Ascending aorta (tissue), 2 donors: ENCODE measurements at regions of chr12 and their contacts with region 1.

Region 1: DNA sequence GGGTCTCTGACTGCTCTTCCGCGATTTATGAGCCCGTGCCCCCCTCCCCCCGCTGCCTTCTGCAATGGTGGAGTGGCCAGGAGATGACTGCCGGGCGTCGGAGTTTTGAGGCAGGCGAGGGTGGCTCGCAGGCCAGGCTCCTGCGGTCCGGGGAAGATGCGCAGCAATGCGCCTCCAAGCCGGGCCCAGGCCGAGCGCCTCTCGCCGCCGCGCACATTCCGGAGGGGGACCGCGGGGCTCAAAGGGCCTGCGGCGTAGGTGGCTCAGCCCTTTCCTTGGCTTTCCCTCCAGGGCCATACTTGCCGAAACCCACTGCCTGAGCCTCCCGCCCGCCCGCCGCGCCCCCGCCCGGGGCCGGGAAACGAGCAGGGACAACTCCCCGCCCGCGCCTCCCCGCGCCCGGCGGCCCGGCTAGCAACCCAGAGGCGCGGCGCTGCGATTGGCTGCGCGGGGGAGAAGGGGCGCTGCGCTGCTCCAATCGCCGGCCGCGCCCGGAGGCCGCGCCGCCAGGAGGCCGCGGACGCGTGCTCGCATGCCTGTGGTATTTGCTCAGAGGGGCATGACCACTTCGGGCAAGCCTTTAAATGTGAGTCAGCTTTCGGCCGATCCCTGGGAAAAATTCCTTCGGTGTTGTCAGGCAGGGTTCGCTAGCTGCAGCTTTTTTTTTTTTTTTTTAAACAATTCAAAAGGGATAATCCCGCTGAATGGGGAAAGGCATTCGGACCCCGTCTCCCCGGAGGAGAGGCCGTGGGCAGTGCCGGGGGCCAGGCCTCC is 157.9 kb upstream of the PARP11 start:
- DNase-seq: peak; percentile 81 to 97
- H3K4me3 ChIP-seq: peak overlapping the region; percentile 51 to 77
- H3K27ac ChIP-seq: peak overlapping the region; percentile 87 to 90
- H3K4me1 ChIP-seq: peaks cover 5 to 6% of the 10 kb centered on the region in 2 donors
- H3K27me3 ChIP-seq: no peaks in the 10 kb centered on the region
- CTCF ChIP-seq: peak in 1 of 3 experiments; percentile 6

Region 2: DNA sequence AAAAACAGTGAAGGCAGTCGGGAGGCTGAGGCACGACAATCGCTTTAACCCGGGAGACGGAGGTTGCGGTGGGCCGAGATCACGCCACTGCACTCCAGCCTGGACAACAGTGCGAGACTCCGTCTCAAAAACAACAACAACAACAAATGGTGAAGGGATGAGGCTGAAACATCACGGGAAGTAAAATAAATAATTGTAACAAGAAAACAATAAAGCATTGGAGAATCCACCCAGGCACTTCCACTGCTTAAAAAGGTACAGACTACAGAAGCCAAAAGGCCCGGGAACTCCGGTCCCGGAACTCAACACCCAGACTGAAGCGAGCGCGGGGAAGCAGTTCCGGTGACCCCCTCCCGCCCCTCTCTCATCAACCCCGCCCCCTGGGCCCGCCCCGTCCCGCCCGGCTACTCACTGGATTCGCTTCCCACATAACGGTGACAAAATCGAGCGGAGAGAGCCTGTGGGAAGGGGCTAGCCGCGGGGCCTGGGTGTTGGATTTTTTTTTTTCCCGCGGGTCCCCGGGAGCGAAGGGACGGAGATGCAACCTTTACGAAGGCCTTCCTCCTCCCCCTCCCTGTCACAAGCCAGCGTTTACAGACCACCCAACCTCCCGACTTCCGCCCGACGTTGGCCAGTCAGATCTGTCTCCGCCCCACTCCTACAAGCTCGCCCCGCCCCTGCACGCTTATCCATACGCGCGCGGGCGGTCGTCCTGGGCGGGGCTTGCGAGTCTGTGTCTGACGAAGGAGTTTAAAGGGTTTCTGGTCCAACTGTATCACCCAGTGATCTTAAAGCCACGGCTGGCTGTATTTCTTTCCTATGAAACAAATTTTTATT is 158.1 kb before region 1 on chr12 and contains the start of gene PARP11:
- intact Hi-C with region 1: loop called (anchors 1 kb)
- DNase-seq: peak; percentile 93 to 99
- H3K4me3 ChIP-seq: peak within 1 kb of the TSS; percentile 49 to 80
- H3K27ac ChIP-seq: peak within 1 kb of the TSS; percentile 93 to 94
- H3K4me1 ChIP-seq: peaks cover 4 to 13% of the 10 kb centered on the region in 2 donors
- H3K27me3 ChIP-seq: no peaks in the 10 kb centered on the region
- CTCF ChIP-seq: no peak
- total RNA-seq, gene PARP11: 4.2 TPM

Region 3: DNA sequence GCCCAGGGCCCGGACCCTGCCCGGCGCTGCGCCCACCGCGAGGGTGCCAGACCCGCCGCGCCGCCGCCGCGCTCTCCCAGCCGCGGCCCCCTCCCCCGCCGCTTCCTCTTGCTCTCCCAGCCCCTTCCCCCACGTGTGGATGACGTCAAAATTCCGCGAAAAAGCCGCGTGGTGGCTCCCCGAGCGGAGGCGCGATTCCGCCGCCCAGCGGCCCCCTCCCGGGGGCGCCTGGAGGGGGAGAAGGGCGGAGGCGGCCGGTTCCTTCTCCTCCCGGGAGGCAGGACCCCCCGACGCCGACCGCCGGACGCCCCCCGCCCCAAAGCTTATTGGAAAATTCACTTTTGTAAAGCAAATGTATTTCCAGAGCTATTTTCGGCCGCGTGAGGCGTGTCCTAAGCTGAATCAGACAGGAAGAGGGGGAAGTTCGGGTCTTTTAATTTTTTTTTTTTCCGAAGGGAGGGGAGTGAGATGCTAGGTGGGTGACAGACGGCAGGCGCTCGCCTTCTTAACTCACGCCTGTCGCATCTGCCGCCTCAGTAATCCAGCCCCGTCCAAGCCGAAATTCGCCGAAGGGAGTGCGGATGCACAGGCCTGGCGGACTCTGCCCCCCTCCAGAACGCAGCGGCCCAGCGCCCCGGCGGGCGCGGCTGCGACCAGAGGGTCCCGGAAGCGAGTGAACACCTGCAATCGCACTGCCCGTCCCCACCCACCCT is 238.3 kb after region 1 on chr12:
- intact Hi-C with region 1: loop called (anchors 1 kb)
- DNase-seq: peak in 1 of 2 donors; percentile 92
- H3K4me3 ChIP-seq: peak overlapping the region; percentile 78 to 87
- H3K27ac ChIP-seq: peak overlapping the region; percentile 83 to 89
- H3K4me1 ChIP-seq: peaks cover 6 to 26% of the 10 kb centered on the region in 2 donors
- H3K27me3 ChIP-seq: no peaks in the 10 kb centered on the region
- CTCF ChIP-seq: peak in 2 of 3 experiments; percentile 23 to 35